Naive thymus-derived CD8-positive, alpha-beta T cell (primary cell): ENCODE measurements at regions of chr1 and their contacts with region 1.

Region 1: GRCh38 chr1:19882111-19883071 is at the start of gene OTUD3:
- DNase-seq: peak; percentile 91 to 98 (median 96)
- ATAC-seq: peak; percentile 95
- H3K4me3 Mint-ChIP-seq: peak within 1 kb of the TSS; percentile 81 to 93 (median 88)
- H3K27ac Mint-ChIP-seq: peak within 1 kb of the TSS; percentile 58 to 92 (median 85)
- H3K4me1 Mint-ChIP-seq: peaks cover 21 to 42% (median 39%) of the 10 kb centered on the region in 4 donors
- H3K27me3 Mint-ChIP-seq: peaks cover 0 to 23% (median 4%) of the 10 kb centered on the region in 5 donors
- polyA plus RNA-seq, gene OTUD3: 0.95 to 2.4 (median 1.6) TPM

Region 2: GRCh38 chr1:19403256-19403655 is 479.1 kb before region 1 on chr1:
- POLR2A ChIA-PET with region 1: interaction called, 10 read pairs
- DNase-seq: no peak
- ATAC-seq: no peak
- H3K4me3 Mint-ChIP-seq: peak overlapping the region in 2 of 10 donors; percentile 26 to 56
- H3K27ac Mint-ChIP-seq: peak overlapping the region; percentile 48 to 90 (median 78)
- H3K4me1 Mint-ChIP-seq: peaks cover 48 to 94% (median 82%) of the 10 kb centered on the region in 4 donors
- H3K27me3 Mint-ChIP-seq: no peaks in the 10 kb centered on the region